GM10248 (cell line): ENCODE measurements at regions of chr9 and their contacts with region 1.

Region 1: GRCh38 chr9:97954550-97954989 is 16.6 kb upstream of the HEMGN start:
- DNase-seq: peak; percentile 70
- CTCF ChIP-seq: peak; percentile 66

Region 2: GRCh38 chr9:97740848-97741821 is 213.4 kb before region 1 on chr9:
- CTCF ChIA-PET with region 1: no interaction called
- POLR2A ChIA-PET with region 1: no interaction called
- DNase-seq: peak; percentile 31
- CTCF ChIP-seq: no peak

Region 3: DNA sequence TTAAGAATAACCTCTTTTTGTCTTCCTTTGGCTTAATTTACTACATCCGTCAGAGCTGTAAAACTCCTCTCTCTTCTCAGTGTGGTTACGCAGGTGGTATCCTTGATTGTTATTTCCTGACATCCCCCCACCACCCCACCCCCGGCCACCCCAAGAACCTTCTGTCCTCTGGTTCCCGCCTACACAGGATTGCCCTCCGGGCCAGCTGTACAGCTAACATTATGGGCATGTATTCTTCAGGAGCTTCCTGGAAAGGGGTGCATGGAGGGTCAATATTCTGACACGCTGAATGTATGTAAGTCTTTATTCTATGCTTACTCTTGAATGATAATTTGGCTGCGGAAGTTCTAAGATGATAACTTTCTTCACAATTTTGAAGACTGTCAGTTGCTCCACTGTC is 15.6 kb after region 1 on chr9:
- CTCF ChIA-PET with region 1: interaction called, 16 read pairs
- POLR2A ChIA-PET with region 1: no interaction called
- DNase-seq: no peak
- CTCF ChIP-seq: no peak